GM10248 (cell line): ENCODE measurements at regions of chr12 and their contacts with region 1.

Region 1: DNA sequence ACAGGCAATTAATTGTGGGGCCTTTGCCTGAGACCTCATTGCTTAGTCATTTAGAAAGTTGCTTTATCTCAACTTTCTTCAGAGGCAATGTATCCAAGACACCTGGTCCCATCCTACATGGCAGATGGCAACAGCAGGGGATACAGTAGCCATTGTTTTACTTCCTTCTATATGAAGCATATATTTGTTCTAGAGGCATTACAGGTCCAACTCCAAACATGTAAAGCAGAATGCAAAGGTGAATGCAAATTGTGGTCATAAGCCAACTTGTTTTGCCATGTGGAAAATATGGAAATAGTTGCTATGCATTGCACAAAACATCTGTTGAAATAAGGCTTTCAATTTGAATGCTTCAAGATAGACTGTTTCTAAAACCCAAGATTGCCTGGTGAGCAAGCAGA is 109.8 kb upstream of the BCAT1 start:
- DNase-seq: no peak
- CTCF ChIP-seq: no peak

Region 2: DNA sequence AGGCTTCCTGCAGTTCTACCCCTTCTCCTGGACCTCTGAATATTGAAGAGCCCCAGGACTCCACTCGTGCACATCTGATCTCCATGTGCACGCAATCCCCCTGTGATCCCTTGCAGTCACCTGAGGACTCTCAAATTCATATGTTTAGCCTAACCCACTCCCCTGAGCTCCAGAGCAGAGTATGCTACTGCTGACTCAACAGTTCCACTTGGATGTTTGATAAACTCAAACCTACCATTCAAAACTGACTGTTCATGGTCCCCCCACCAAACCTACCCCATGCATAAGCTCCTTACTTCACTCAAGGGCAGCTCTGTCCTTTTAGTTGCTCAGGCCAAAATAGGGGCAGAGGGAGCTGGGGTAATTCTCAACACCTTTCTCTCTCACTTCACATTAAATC is 40.4 kb after region 1 on chr12:
- CTCF ChIA-PET with region 1: no interaction called
- POLR2A ChIA-PET with region 1: interaction called, 11 read pairs
- DNase-seq: no peak
- CTCF ChIP-seq: no peak